ENCODE measurements at regions of chr1 and their contacts with region 1.

Region 1: DNA sequence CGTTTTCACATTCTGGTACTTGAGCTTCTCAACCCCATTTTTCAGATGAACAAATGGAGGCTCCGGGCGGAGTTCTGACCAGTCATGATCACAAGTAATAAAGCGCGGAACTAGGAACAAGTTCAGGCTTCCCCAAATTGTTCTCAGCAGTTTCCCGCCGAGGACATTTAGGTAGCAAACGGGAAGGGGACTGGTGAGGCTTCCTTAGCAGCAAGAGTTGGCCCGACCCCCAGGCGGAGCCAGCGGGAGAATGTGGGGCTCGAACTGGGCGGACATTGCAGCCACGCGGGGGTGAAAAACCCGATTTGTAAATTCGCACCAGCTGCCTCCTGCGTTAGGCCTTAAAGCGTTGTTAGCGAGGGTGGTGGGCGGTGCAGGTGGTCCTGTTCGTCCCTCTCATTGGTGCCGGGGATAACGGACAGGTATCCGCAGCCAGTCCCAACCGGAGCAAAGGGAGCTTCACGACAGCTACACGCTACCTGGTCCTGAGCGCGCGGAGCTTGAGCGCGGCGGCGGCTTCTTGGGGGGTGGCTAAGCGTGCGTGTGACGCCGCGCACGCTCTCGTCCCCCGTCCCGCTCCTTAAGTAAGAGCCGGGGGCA is 15.3 kb downstream of the SEMA6C start:
- DNase-seq: peak; percentile 95 to 98 (median 97)
- H3K4me3 ChIP-seq: peak overlapping the region in 6 of 7 experiments; percentile 5 to 74 (median 50)
- H3K27ac ChIP-seq: peak overlapping the region in 1 of 2 experiments; percentile 26
- H3K4me1 ChIP-seq: peaks cover 0 to 9% (median 5%) of the 10 kb centered on the region in 4 experiments
- H3K27me3 ChIP-seq: peaks cover 0 to 4% (median 0%) of the 10 kb centered on the region in 5 experiments

Region 2: GRCh38 chr1:150808121-150808520 is 323.0 kb before region 1 on chr1 and contains the start of gene CTSK:
- CTCF ChIA-PET with region 1: no interaction called
- POLR2A ChIA-PET with region 1: no interaction called
- DNase-seq: no peak
- H3K4me3 ChIP-seq: peak within 1 kb of the TSS in 5 of 7 experiments; percentile 13 to 66 (median 34)
- H3K27ac ChIP-seq: peak within 1 kb of the TSS in 1 of 2 experiments; percentile 40
- H3K4me1 ChIP-seq: peaks cover 7 to 19% (median 14%) of the 10 kb centered on the region in 4 experiments
- H3K27me3 ChIP-seq: no peaks in the 10 kb centered on the region

Region 3: DNA sequence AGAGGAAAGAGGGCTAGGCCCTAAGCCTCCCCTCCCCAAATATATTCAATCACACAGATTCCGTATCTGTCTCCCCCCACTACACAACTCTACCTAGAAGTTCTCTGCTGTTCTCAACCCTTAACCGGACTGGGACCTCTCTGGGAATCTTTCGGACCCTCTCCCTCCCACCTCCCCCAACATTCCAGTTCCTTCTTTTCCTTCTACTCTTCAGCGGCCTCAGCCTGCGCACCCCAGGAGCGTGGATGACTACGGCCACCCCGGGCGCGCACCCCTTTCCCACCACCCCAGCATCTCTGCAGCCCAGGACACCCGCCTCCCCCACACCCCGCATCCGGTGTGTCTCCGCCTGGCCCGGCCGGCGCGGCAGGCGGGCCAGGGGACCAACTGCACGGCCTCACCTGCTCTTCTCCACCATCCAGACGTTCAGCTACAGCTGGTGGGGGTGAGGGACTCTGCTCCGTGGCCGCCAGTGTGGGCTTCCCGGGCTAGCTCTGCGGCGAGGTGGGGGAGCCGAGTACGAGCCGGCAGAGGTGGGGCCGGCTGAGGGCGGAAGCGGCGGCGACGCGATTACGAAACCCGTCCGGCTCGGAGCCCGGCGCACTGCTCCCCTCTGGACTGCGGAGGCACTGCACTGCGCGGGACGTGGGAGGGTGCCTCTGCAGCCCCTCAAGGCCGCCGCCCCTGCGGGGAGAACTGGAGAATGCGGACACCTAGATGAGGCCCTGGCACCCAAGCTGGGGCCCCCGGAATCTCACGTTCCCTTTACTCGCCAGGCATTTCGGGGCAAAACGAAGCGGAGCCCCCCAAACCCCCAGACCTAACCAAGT is 71.8 kb before region 1 on chr1 and contains the start of gene CDC42SE1:
- CTCF ChIA-PET with region 1: no interaction called
- POLR2A ChIA-PET with region 1: no interaction called
- DNase-seq: peak; percentile 92 to 96 (median 94)
- H3K4me3 ChIP-seq: peak within 1 kb of the TSS; percentile 66 to 98 (median 95)
- H3K27ac ChIP-seq: peak within 1 kb of the TSS; percentile 79 to 93
- H3K4me1 ChIP-seq: peaks cover 18 to 60% (median 53%) of the 10 kb centered on the region in 4 experiments
- H3K27me3 ChIP-seq: no peaks in the 10 kb centered on the region

Region 4: GRCh38 chr1:151145304-151146071 is 14.4 kb after region 1 on chr1:
- CTCF ChIA-PET with region 1: interaction called, 26 read pairs
- POLR2A ChIA-PET with region 1: interaction called, 4 read pairs
- DNase-seq: peak in 1 of 3 donors; percentile 33
- H3K4me3 ChIP-seq: peak overlapping the region; percentile 59 to 89 (median 80)
- H3K27ac ChIP-seq: no peak overlapping the region
- H3K4me1 ChIP-seq: peaks cover 0 to 36% (median 25%) of the 10 kb centered on the region in 4 experiments
- H3K27me3 ChIP-seq: peaks cover 0 to 13% (median 0%) of the 10 kb centered on the region in 5 experiments

Measured in common myeloid progenitor, CD34-positive (primary cell).